Activated naive CD4-positive, alpha-beta T cell treated with anti-CD3 and anti-CD28 coated beads for 36 hours (primary cell): ENCODE measurements at regions of chr2 and their contacts with region 1.

Region 1: GRCh38 chr2:60861736-60862135 is 19.6 kb upstream of the REL start:
- DNase-seq: no peak
- H3K4me3 Mint-ChIP-seq: no peak overlapping the region
- H3K27ac Mint-ChIP-seq: no peak overlapping the region
- H3K4me1 Mint-ChIP-seq: peaks cover 13% of the 10 kb centered on the region
- H3K27me3 Mint-ChIP-seq: no peaks in the 10 kb centered on the region

Region 2: GRCh38 chr2:60839126-60839813 is 22.5 kb before region 1 on chr2:
- CTCF ChIA-PET with region 1: no interaction called
- intact Hi-C with region 1: loop called (anchors 1 kb)
- DNase-seq: no peak
- H3K4me3 Mint-ChIP-seq: no peak overlapping the region
- H3K27ac Mint-ChIP-seq: no peak overlapping the region
- H3K4me1 Mint-ChIP-seq: peaks cover 32% of the 10 kb centered on the region
- H3K27me3 Mint-ChIP-seq: no peaks in the 10 kb centered on the region

Region 3: DNA sequence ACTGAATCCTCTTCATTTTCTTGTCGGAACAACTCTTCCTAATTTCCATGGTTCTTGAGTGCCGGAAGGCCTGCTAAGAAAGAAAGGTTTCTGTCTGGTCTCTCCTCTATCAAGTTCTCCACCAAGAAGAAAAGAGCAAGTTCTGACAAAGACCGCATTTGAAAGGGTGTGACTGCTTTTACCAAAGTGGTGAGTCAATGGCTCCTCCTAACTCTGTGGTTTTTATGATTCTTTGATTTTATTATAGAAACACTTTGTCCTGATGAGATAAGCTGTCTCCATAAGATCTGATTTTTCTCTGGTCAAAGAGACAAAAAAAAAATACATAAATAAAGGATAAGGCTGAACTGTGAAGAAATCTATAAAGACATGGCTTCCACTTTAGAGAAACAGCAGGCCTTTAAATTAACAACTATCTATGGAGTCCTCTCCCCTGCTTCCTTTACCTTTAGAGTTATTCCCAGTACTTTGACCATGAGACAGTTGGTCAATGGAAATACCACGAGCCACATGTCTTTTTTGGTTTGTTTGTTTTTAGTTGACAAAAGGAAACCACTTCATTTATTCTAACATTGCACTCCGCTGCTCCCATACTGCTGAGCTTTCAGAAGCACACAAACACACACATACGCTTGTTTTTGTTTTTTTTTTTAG is 87.3 kb after region 1 on chr2:
- CTCF ChIA-PET with region 1: no interaction called
- intact Hi-C with region 1: no loop called
- DNase-seq: no peak
- H3K4me3 Mint-ChIP-seq: no peak overlapping the region
- H3K27ac Mint-ChIP-seq: no peak overlapping the region
- H3K4me1 Mint-ChIP-seq: peaks cover 17% of the 10 kb centered on the region
- H3K27me3 Mint-ChIP-seq: no peaks in the 10 kb centered on the region

Region 4: GRCh38 chr2:61247204-61247812 is 385.6 kb after region 1 on chr2:
- CTCF ChIA-PET with region 1: no interaction called
- intact Hi-C with region 1: no loop called
- DNase-seq: no peak
- H3K4me3 Mint-ChIP-seq: no peak overlapping the region
- H3K27ac Mint-ChIP-seq: no peak overlapping the region
- H3K4me1 Mint-ChIP-seq: no peaks in the 10 kb centered on the region
- H3K27me3 Mint-ChIP-seq: no peaks in the 10 kb centered on the region